A549 (cell line): ENCODE measurements at regions of chr9 and their contacts with region 1.

Region 1: DNA sequence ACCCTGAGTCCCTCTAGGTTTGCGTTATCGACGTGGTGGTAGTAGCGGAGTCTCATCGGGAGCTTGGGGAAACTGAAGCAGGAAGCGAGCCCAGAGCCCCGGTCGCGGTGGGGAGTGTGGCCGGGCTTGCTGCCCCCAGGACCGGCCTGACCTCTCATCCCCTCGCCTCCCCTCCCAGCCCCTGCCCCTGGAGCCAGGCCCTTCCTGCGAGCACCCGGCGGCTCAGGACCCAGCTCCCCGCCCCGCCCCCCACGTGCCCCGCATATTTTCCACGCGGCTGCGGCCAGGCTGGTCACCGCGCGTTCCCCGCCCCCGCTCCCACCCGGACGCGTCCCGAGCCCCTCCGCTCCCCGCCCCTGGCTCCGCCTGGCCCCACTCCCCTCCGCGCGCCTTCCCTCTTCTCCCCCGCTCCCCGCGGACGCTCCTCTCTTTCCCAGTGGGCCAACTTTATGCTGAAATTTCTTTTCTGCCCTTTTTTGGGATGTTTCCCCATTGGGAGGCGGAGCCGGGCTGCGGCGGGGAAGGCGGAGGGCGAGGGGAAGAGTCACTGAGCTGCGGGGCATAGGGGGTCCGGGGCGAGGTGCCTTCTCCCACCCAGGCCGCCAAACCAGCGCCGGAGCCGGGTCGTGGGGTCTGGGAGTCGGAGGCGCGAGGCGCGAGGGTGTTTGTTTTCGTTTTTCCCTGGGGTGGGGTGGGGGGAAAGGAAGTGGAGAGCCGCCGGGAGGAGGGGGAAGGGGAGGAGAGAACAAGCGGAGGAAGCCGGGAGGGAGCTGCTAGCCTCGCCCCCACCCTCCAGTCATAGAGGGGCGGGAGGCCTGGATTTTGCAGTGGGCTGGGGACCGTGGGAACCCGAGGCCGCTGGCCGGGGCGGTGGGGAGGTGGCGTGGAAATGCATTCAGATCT is 957 bp upstream of the TPM2 start:
- DNase-seq: peak; percentile 68 to 71
- ATAC-seq: peak; percentile 60 to 71
- H3K4me3 ChIP-seq: peak overlapping the region; percentile 87
- H3K27ac ChIP-seq: peak overlapping the region; percentile 93 to 99
- H3K4me1 ChIP-seq: peaks cover 37% of the 10 kb centered on the region
- CTCF ChIP-seq: no peak
- EP300 ChIP-seq: no peak
- POLR2A ChIP-seq: 0 out of 2 replicates have a peak, but pooled peaks have one; percentile 30
- RAD21 ChIP-seq: no peak

Region 2: GRCh38 chr9:35664531-35665470 is 25.9 kb before region 1 on chr9 and contains the start of gene ARHGEF39:
- CTCF ChIA-PET with region 1: interaction called, 498 read pairs
- POLR2A ChIA-PET with region 1: interaction called, 21 read pairs
- DNase-seq: peak; percentile 86 to 94
- ATAC-seq: peak; percentile 87 to 88
- H3K4me3 ChIP-seq: peak within 1 kb of the TSS; percentile 71
- H3K27ac ChIP-seq: peak within 1 kb of the TSS; percentile 94 to 97
- H3K4me1 ChIP-seq: peaks cover 49% of the 10 kb centered on the region
- CTCF ChIP-seq: peak; percentile 47
- EP300 ChIP-seq: no peak
- POLR2A ChIP-seq: peak; percentile 65
- RAD21 ChIP-seq: peak; percentile 39 to 62; a peak in 4 of 5 replicates
- polyA plus RNA-seq, gene ARHGEF39: 17.6 and 21.4 TPM in 2 replicates

Region 3: GRCh38 chr9:35675732-35676392 is 14.8 kb before region 1 on chr9:
- CTCF ChIA-PET with region 1: interaction called, 498 read pairs
- POLR2A ChIA-PET with region 1: interaction called, 18 read pairs
- DNase-seq: no peak
- ATAC-seq: no peak
- H3K4me3 ChIP-seq: no peak overlapping the region
- H3K27ac ChIP-seq: 0 out of 6 replicates have a peak overlapping the region, but pooled peaks of 1 of the 2 experiments have one; percentile 10
- H3K4me1 ChIP-seq: peaks cover 21% of the 10 kb centered on the region
- CTCF ChIP-seq: no peak
- EP300 ChIP-seq: no peak
- POLR2A ChIP-seq: no peak
- RAD21 ChIP-seq: no peak

Region 4: DNA sequence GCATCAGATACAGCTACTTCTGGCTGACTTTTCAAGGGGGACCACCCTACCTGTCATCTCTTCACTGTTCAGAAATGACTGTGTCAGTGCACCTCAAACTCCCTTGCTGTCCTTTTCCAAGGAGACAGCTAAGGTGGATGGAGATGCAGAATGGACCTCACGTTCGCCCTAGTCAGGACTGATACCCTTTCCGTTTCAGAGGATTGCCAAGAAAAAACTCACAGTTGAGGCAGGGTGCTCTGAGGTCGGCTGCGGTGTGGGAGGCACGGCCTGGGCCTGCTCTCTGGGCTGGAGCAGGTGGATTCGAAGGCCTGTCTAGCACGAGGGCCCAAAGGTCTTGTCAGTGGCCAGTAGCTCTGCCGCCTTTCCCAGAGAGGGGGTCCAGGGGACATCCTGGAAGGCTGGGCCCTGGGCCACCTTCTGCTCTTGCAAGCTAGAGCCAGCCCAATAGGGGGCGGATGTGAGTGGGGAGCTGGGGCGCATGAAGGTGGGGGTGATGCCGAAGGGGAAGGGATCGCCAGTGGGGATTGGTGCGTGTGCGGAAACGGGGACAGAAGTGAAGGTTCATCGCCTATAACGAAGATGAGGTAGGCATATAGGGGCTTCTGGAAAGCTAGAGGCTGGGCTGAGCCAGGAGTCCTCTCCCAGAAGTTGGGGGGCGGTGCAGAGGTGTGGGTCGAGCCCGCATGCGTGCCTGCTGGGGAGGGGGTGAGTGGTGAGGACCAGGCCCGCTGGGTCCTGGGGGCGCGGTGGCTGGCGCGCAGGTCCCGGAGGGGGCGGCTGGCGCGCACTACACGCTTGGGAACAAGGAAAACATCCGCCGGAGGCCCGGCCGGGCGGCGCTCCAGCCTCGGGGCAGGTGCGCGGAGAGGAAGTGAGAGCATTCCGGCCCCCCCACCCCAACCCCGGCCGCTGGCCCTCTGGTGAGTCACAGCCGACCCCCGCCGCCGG is 65.9 kb after region 1 on chr9:
- CTCF ChIA-PET with region 1: interaction called, 12 read pairs
- POLR2A ChIA-PET with region 1: no interaction called
- DNase-seq: peak; percentile 64 to 86
- ATAC-seq: peak; percentile 89 to 91
- H3K4me3 ChIP-seq: peak overlapping the region; percentile 83
- H3K27ac ChIP-seq: peak overlapping the region; percentile 95 to 97
- H3K4me1 ChIP-seq: peaks cover 16% of the 10 kb centered on the region
- CTCF ChIP-seq: peak; percentile 69
- EP300 ChIP-seq: no peak
- POLR2A ChIP-seq: peak; percentile 19
- RAD21 ChIP-seq: peak; percentile 34 to 42; a peak in 3 of 5 replicates

Region 5: DNA sequence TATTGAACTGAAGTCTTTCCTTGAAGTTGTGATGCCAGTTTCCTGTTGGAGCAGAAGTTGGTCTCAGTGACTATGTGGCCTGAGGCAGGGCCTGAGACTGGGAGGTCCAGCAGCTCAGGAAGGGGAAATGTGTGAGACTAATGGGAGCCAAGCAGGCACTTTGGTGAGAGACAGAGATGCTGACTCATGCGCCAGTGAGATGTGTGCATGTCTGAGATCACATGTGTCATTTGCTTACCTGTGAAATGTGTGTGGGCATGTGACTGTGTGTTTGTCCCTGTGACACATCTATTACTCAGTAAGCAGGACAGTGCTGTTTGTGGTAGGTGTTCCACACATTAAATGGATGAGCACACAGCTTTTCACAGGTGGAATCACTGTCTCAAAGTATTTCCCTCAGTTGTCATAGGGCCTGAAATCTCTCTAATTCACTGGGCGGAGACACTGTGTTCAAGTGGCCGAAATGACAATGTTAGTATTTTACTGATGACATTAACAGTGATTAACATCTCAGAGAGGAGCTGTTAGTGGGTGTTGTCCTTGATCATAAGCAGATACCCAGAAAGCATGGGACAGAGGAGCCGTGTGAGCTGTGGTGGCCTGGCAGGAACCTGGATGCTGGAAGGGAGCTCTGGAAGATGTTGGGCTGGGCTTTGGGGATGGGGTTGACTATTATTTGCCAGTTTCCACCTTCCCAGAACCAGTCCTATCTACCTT is 108.1 kb after region 1 on chr9:
- CTCF ChIA-PET with region 1: no interaction called
- POLR2A ChIA-PET with region 1: no interaction called
- DNase-seq: peak in 1 of 2 experiments; percentile 54
- ATAC-seq: peak; percentile 46 to 63; a peak in 5 of 6 replicates
- H3K4me3 ChIP-seq: no peak overlapping the region
- H3K27ac ChIP-seq: peak overlapping the region; percentile 8 to 18; a peak in 3 of 6 replicates
- H3K4me1 ChIP-seq: peaks cover 33% of the 10 kb centered on the region
- CTCF ChIP-seq: no peak
- EP300 ChIP-seq: no peak
- POLR2A ChIP-seq: no peak
- RAD21 ChIP-seq: no peak

Region 6: DNA sequence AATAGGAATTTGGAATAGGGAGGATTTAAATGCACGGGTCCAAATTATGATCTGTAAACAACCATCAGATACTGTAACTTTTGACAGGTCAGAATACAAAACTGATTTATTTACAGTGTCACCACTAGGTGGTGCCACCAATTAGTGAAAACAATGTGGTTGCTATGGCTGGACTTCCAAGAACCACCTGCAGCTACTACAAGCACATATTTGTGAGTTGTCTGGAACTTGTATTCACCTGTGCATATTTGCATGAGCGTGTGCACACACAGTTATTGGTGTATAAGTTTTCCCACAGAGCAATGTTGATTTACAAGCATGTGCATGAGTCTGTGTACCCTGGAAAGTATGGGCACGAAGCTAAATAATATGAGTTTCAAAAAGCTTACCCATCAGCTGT is 212.4 kb after region 1 on chr9:
- CTCF ChIA-PET with region 1: no interaction called
- POLR2A ChIA-PET with region 1: no interaction called
- DNase-seq: peak; percentile 74 to 79
- ATAC-seq: peak in 1 of 2 experiments; percentile 17; a peak in 1 of 6 replicates
- H3K4me3 ChIP-seq: no peak overlapping the region
- H3K27ac ChIP-seq: peak overlapping the region in 1 of 2 experiments; percentile 25; a peak in 2 of 6 replicates
- H3K4me1 ChIP-seq: peaks cover 38% of the 10 kb centered on the region
- CTCF ChIP-seq: peak; percentile 88
- EP300 ChIP-seq: no peak
- POLR2A ChIP-seq: no peak
- RAD21 ChIP-seq: peak; percentile 85 to 86

Region 7: DNA sequence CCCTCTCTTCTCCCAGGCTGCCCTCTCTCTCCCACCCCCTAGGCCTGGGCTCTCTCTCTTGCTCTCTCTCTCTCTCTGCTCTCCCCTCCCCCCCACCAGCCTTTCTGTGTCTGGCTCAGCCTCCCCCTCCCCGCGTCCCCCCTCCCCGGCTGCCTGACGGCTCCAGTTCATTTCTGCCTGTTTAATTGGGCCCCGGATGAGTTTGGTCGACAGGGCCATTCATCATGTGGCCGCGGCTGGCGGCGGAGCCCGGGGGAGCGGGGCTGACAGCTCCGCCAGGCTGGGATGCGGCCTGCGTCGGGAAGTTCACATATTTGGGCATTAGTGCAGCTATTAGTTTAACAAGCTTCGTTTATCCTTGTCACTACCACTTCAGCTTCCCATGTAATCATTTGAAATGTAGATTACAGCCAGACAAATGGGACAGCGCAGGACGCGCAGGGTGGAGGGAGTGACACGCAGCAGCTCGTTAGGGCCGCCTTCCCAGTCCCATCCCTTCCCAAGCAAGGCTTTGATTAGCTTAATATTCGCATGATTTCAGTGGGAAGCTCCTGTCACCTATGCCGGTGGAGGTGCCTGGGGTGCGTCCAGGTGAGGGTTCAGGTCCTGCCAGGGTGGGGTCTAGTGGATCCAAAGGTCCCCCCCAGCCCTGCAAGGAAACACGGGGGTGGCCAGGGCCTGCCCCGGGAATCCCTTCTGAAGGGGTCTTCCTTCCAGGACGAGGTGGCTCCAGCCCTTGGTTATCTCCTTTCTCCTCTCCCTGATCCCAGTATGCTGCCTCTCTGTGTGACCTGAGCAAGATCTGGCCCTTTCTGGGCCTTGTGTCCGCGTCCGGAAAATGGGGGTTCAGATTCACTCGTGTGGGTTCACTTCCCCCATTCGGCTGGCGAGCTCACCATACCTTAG is 1128.5 kb after region 1 on chr9:
- CTCF ChIA-PET with region 1: no interaction called
- POLR2A ChIA-PET with region 1: no interaction called
- DNase-seq: no peak
- ATAC-seq: no peak
- H3K4me3 ChIP-seq: no peak overlapping the region
- H3K27ac ChIP-seq: no peak overlapping the region
- H3K4me1 ChIP-seq: no peaks in the 10 kb centered on the region
- CTCF ChIP-seq: no peak
- EP300 ChIP-seq: no peak
- POLR2A ChIP-seq: no peak
- RAD21 ChIP-seq: no peak